CD14-positive monocyte (primary cell): ENCODE measurements at regions of chr15 and their contacts with region 1.

Region 1: GRCh38 chr15:60389261-60390077 is 8.3 kb downstream of the ANXA2 start:
- DNase-seq: no peak
- H3K4me3 ChIP-seq: no peak overlapping the region
- H3K4me3 Mint-ChIP-seq: no peak overlapping the region
- H3K27ac ChIP-seq: peak overlapping the region in 1 of 2 donors; percentile 99
- H3K27ac Mint-ChIP-seq: peak overlapping the region in 4 of 7 donors; percentile 26 to 66 (median 51)
- H3K4me1 ChIP-seq: peaks cover 42 to 59% of the 10 kb centered on the region in 2 donors
- H3K4me1 Mint-ChIP-seq: peaks cover 68% of the 10 kb centered on the region
- H3K27me3 ChIP-seq: no peaks in the 10 kb centered on the region
- H3K27me3 Mint-ChIP-seq: peaks cover 0 to 1% (median 0%) of the 10 kb centered on the region in 3 donors
- CTCF ChIP-seq: no peak

Region 2: GRCh38 chr15:60438646-60439045 is 49.2 kb after region 1 on chr15:
- intact Hi-C with region 1: loop called (anchors 10 kb)
- DNase-seq: no peak
- H3K4me3 ChIP-seq: no peak overlapping the region
- H3K4me3 Mint-ChIP-seq: no peak overlapping the region
- H3K27ac ChIP-seq: no peak overlapping the region
- H3K27ac Mint-ChIP-seq: no peak overlapping the region
- H3K4me1 ChIP-seq: no peaks in the 10 kb centered on the region
- H3K4me1 Mint-ChIP-seq: no peaks in the 10 kb centered on the region
- H3K27me3 ChIP-seq: no peaks in the 10 kb centered on the region
- H3K27me3 Mint-ChIP-seq: peaks cover 0 to 2% (median 0%) of the 10 kb centered on the region in 3 donors
- CTCF ChIP-seq: no peak

Region 3: DNA sequence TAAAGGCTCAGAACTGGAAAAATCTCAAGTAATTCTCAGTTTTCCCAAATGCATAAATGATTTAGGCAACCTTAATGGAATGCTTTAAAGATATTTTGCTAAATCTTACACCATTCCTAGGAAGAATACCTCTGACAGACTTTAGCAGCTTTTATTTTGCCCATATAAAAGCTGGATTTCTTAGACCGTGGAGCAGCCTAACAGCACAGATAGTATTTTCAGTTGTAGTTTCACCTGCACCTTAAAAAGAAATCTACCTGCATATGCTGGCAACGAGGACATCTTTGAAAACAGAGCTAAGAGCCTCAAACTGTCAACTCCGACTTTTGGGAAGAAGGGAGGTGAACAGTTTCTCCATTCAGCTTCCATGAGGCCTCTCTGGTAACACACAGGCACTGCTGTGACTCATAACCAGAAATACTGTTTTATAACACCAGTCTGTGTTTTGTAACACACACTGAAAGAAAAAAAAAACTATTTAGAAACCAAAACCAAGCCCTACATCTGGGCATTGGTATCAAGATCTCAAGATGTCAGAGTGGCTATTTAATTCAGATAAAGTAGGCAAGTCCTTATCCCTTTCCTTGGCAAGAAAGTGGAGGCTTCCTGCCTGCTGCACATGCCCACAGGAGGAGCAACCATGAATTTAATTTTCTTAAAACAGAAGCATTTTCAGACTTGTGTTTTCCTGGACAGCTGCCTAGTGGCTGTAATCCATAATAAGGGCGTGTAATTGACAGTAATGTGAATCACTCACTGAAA is 271.0 kb after region 1 on chr15:
- intact Hi-C with region 1: no loop called
- DNase-seq: peak; percentile 1 to 15 (median 2)
- H3K4me3 ChIP-seq: no peak overlapping the region
- H3K4me3 Mint-ChIP-seq: no peak overlapping the region
- H3K27ac ChIP-seq: no peak overlapping the region
- H3K27ac Mint-ChIP-seq: peak overlapping the region in 1 of 7 donors; percentile 41
- H3K4me1 ChIP-seq: peaks cover 7 to 21% of the 10 kb centered on the region in 2 donors
- H3K4me1 Mint-ChIP-seq: peaks cover 24% of the 10 kb centered on the region
- H3K27me3 ChIP-seq: no peaks in the 10 kb centered on the region
- H3K27me3 Mint-ChIP-seq: peaks cover 0 to 8% (median 5%) of the 10 kb centered on the region in 3 donors
- CTCF ChIP-seq: no peak